SK-MEL-5 (cell line): ENCODE measurements at regions of chr7 and their contacts with region 1.

Region 1: GRCh38 chr7:135942614-135943013 is 34.5 kb downstream of the MTPN start:
- DNase-seq: no peak

Region 2: DNA sequence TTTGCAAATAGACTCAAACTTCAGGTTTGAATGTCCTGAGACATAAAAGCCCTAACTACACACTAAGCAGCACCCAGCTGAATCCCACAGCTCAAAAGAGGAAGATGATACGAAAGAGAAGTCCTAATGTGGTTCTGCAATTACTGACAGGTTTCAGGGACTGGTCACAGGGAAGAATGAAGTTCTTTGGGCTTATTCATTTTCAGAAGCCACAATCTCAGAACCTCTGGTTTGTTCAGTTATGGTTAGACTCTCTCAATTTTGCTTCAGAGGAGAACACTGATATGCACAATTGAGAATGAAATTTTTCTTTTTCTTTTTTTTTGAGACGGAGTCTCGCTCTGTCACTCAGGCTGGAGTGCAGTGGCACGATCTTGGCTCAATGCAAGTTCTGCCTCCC is 99.4 kb before region 1 on chr7:
- in situ Hi-C with region 1: loop called (anchors 10 kb)
- DNase-seq: no peak